ENCODE measurements at regions of chr18 and their contacts with region 1.

Region 1: GRCh38 chr18:49250816-49251388 is 209.5 kb downstream of the DYM start:
- DNase-seq: no peak
- ATAC-seq: peak in 2 of 8 donors; percentile 35 to 42
- H3K4me3 ChIP-seq: no peak overlapping the region
- H3K27ac ChIP-seq: no peak overlapping the region
- H3K4me1 ChIP-seq: peaks cover 0 to 18% (median 0%) of the 10 kb centered on the region in 9 donors
- H3K27me3 ChIP-seq: no peaks in the 10 kb centered on the region
- CTCF ChIP-seq: peak in 7 of 9 donors; percentile 35 to 63 (median 48)

Region 2: DNA sequence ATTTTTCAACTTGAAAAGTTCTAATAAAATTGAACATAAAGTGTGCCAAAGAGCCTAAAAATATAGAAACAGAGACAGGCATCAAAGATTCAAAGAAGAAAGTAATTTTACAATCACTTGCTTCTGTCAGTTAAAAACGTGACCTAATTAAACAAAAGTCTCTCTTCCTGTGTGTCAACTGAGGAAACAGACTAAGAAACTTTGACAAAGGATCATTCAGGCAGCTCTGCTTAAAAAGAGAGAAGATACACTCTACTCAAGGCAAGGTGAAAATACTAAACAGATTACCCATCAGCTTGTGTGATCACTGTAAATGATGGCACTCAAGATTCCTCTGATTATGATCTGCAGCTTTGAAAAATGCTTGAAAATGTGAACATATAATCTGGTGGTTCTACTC is 161.8 kb after region 1 on chr18:
- intact Hi-C with region 1: loop called in 6 of 10 experiments (anchors 5 to 10 kb)
- DNase-seq: no peak
- ATAC-seq: no peak
- H3K4me3 ChIP-seq: no peak overlapping the region
- H3K27ac ChIP-seq: peak overlapping the region in 4 of 10 donors; percentile 1 to 46 (median 6)
- H3K4me1 ChIP-seq: peaks cover 0 to 20% (median 12%) of the 10 kb centered on the region in 9 donors
- H3K27me3 ChIP-seq: no peaks in the 10 kb centered on the region
- CTCF ChIP-seq: no peak